ENCODE measurements at regions of chr14 and their contacts with region 1.

Region 1: DNA sequence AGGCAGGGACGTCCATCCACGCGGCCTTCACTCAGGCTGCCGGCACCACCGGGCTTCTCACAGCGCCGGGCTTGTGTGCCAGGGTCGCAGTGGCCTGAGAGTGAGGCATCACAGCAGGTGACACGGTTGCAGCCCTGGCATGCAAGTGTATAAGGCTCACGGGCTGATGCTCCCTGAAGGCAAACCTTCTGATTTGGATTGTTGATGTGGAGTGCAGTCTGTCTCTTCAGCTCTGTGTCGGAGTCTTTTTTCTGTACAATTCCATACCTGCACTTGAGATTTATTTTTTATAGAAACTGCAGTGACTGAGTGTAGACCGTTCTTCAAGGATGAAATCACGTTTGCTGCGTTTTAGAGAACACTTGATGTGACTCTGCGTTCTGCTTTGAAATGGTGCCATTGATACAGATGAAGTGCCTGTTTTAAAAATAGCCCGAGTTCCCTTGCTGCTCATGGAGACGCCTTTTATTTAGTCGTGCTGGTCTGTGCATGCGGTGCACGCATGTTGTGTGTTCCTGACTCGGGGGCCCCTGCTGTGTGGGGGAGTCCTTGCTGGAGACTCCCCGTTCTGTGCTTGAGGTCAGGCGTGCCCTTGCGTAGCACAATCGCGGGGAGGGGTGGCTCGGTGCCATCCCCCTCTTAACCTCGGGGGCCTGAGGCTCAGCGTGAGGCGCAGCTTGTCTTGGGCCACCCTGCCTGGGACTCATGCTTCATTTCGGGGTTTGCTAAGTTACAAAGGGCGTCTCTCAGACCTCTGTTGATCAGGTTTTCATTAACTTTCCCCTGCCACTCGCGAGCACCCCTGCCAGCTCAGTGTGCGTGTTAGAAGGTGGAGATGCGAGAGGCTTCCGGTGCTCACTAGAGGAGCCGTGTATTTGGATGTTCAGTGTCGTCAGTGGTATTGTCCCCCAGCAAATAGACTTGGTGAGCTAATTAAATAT is 21.6 kb upstream of the AMN start:
- DNase-seq: no peak
- ATAC-seq: peak; percentile 75

Region 2: GRCh38 chr14:102819747-102820330 is 81.1 kb before region 1 on chr14:
- intact Hi-C with region 1: loop called (anchors 10 kb)
- DNase-seq: no peak
- ATAC-seq: no peak